Psoas muscle (tissue), 8 donors: ENCODE measurements at regions of chrX and their contacts with region 1.

Region 1: DNA sequence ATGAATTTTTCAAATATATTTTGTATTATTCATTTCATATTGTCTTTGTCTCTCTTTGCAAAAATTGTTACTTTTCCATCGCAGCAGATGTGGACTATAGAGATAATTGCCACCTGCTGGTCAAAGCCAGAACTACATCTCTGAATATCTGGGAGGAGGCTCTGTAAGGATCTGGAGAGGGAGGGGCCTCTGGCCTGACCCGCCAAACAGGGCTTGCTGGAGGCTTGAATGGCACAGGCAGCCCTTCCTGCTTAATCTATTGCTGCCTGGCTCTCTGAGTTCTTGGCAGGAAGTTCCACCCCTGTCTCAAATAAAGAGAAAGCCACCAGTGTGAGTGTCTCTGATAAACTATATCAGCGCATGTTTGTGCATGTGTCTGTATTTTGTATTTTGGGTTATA is 132.4 kb downstream of the ZMAT1 start:
- DNase-seq: peak; percentile 56 to 75
- ATAC-seq: peak; percentile 73 to 94 (median 92)
- H3K4me3 ChIP-seq: peak overlapping the region; percentile 13
- H3K27ac ChIP-seq: no peak overlapping the region
- H3K4me1 ChIP-seq: no peaks in the 10 kb centered on the region
- H3K27me3 ChIP-seq: no peaks in the 10 kb centered on the region
- CTCF ChIP-seq: peak; percentile 82

Region 2: GRCh38 chrX:101595739-101596419 is 203.5 kb before region 1 on chrX:
- intact Hi-C with region 1: loop called (anchors 5 kb)
- DNase-seq: no peak
- ATAC-seq: peak; percentile 43 to 78 (median 68)
- H3K4me3 ChIP-seq: no peak overlapping the region
- H3K27ac ChIP-seq: no peak overlapping the region
- H3K4me1 ChIP-seq: no peaks in the 10 kb centered on the region
- H3K27me3 ChIP-seq: peaks cover 0 to 32% (median 0%) of the 10 kb centered on the region in 3 donors
- CTCF ChIP-seq: peak; percentile 54

Region 3: DNA sequence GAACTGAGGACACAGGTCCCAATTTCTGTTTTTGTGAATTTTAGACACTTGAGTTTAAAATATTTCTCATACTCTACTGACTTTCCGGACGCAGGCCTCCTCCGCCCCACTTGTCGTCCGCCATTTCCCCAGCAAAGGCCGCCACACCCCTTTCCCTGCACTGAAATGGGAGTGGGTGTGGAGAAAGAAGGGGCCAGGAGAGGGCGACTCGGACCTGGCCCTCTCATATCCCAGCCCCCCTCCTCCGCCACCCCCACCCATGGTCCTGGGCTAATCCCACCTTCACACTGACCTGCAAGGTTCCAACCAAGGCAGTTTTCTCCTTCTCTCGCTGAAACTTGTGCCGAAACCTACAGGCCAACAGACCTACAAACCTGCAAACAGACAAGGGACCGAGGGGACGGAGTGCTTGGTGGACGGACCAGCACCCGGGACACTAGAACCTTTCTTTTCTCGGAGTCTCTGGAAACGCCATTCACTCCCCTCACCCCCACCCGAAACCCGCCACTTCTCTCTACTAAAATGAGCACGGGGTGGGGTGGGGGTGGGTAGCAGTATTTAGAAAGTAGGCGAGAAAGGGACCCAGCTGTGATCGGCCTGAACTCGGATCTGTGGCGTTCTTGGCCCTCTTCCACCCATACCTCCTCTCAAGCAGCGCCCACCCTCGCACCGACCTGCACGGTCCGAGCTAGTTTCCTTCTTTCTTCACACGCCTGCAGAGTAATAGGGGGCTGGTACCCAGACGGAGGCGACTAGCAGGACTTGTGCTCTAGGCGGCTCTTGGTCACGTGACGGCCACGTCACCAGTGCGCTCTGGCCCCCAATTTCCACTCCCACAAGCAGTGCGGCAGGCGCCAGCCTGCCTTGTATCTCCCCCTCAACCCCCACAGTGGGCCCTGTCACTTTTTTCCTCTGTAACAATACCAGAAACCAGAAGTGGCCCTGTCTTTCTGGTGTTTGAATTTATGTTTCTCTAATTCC is 181.9 kb before region 1 on chrX and contains the start of gene ARMCX6:
- intact Hi-C with region 1: loop called in 1 of 2 experiments (anchors 5 kb)
- DNase-seq: peak; percentile 71 to 83
- ATAC-seq: peak; percentile 77 to 90 (median 84)
- H3K4me3 ChIP-seq: peak within 1 kb of the TSS; percentile 72
- H3K27ac ChIP-seq: peak within 1 kb of the TSS; percentile 76
- H3K4me1 ChIP-seq: peaks cover 5% of the 10 kb centered on the region
- H3K27me3 ChIP-seq: no peaks in the 10 kb centered on the region
- CTCF ChIP-seq: peak; percentile 34
- total RNA-seq, gene ARMCX6: 10.5 to 32.1 (median 20.8) TPM